Endothelial cell of umbilical vein (primary cell): ENCODE measurements at regions of chr5 and their contacts with region 1.

Region 1: DNA sequence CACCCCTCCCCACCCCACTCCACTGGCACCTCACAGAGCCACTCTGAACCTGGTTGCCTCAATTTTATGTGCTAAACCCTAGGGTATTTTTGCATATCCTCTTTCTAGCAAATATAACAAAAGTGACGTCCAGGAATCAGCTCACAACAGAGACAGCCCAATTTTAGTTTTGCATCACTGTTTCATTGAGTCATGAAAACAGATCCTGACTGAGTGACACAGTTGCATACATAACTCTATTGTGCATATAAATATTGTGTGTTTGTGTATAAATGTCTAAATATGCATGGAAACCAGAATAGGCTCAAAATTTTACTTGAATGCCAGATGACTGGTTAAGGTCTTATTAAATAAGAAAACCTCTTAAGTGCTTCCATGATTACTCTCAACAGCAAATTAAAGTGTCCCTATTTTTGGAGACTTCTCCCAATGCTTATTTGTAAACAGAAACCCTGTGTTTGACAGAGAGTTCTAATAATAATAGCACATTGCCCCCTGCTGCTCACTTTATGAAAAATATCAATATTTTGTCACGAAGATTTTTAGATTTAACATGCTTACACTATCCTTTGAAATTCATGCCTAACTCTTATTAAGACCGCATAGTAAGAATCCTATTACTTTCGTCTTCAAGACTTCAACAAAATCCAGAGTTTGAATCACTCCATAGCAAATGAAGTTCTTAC is 75.5 kb upstream of the PRRC1 start:
- DNase-seq: peak; percentile 10
- H3K4me3 ChIP-seq: no peak overlapping the region
- H3K27ac ChIP-seq: no peak overlapping the region
- H3K4me1 ChIP-seq: no peaks in the 10 kb centered on the region
- H3K27me3 ChIP-seq: peaks cover 6 to 18% of the 10 kb centered on the region in 2 experiments
- CTCF ChIP-seq: no peak
- POLR2A ChIP-seq: no peak

Region 2: GRCh38 chr5:126656396-126657007 is 785.4 kb before region 1 on chr5:
- CTCF ChIA-PET with region 1: interaction called, 4 read pairs
- POLR2A ChIA-PET with region 1: no interaction called
- dilution Hi-C with region 1: no loop called
- intact Hi-C with region 1: loop called (anchors 1 kb)
- DNase-seq: peak; percentile 47
- H3K4me3 ChIP-seq: no peak overlapping the region
- H3K27ac ChIP-seq: no peak overlapping the region
- H3K4me1 ChIP-seq: no peaks in the 10 kb centered on the region
- H3K27me3 ChIP-seq: no peaks in the 10 kb centered on the region
- CTCF ChIP-seq: peak; percentile 61 to 62
- POLR2A ChIP-seq: no peak

Region 3: DNA sequence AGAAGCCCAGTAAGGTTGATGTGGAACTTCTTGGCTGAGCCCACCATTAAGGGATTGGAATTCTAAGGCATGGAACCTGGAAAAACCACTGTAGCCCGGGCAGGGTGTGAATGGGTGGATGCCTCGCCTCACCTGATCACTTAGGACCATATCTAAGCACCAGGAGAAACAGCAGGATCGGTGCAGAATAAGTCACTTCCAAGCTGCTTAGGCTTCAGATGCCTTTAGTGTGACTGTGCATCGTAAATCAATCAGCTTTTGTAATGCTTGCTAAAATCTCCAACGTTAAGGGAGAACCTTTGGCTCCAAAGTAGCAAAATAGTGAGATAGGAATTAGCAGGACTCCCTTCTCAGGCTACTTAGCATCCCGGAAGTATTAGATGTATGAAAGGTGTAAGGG is 255.3 kb before region 1 on chr5:
- CTCF ChIA-PET with region 1: no interaction called
- POLR2A ChIA-PET with region 1: no interaction called
- dilution Hi-C with region 1: no loop called
- intact Hi-C with region 1: loop called (anchors 10 kb)
- DNase-seq: no peak
- H3K4me3 ChIP-seq: no peak overlapping the region
- H3K27ac ChIP-seq: no peak overlapping the region
- H3K4me1 ChIP-seq: no peaks in the 10 kb centered on the region
- H3K27me3 ChIP-seq: peaks cover 0 to 5% of the 10 kb centered on the region in 2 experiments
- CTCF ChIP-seq: no peak
- POLR2A ChIP-seq: no peak

Region 4: DNA sequence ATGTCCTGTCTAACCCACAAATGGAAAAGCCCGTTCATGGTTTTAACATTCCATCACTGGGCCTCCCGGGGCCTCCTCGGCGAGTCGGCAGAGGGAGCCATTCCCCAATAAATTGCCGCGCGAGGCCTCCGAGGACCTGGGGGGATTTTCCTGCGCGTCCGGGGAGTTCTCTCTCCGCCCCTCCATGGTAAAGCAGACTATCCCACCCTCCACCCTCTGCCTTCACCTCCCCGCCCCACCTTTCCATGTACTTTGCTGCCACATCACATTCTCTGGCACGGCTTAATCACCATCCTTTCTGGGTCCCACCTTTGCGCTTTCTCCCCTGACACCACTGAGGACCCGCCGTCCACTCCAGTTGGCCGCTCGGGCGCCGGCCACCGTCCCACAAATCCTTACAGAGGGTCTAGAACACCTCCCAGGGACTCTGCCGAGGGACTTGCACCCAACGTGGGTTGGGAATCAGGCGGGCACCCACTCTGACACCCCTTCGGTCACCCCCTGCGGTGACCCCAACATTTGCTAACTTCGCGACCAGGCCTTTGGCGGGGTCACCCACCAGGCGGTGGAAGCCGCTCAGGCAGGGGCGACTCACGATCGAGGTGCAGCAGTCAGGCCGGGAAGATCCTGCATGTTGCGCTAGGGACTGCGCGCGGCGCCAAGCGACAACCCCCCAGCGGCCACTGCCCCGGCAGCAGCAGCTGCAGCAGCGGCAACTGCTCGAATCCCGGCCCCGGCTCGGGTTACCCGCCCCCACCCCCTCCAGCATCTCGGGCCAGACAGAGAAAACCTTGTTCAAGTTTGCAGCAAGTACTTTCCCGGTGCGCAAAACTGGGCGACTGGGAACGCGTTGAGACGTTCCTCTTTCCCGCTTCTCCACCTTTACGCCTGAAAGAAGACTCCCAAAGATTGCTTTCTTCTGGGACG is 151.7 kb before region 1 on chr5 and contains the start of gene MEGF10:
- CTCF ChIA-PET with region 1: interaction called, 3 read pairs
- POLR2A ChIA-PET with region 1: no interaction called
- dilution Hi-C with region 1: no loop called
- intact Hi-C with region 1: loop called (anchors 1 kb)
- DNase-seq: peak; percentile 33
- H3K4me3 ChIP-seq: peak within 1 kb of the TSS; percentile 8 to 46 (median 28)
- H3K27ac ChIP-seq: no peak within 1 kb of the TSS
- H3K4me1 ChIP-seq: peaks cover 17% of the 10 kb centered on the region
- H3K27me3 ChIP-seq: peaks cover 26 to 47% of the 10 kb centered on the region in 2 experiments
- CTCF ChIP-seq: peak; percentile 66 to 71
- POLR2A ChIP-seq: no peak
- total RNA-seq, gene MEGF10: 0.21 and 1.00 TPM in 2 replicates

Region 5: DNA sequence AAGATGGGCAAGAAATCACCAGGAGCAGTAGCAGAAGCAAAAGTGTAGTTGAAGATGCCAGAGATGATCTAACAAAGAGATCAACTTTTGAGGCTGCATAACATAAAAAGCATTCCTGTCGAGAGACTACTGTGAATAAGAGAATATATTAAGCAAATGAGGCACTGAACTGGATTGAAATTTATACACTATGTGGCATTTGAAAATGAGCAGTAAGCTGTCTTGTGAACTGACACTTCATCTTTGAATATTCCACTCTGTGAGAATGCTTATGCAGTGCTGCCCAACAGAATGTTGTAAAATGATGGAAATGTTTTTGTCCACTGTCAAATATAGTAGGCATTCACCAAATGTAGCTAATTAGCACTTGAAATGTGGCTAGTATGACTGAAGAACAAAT is 56.6 kb after region 1 on chr5:
- CTCF ChIA-PET with region 1: no interaction called
- POLR2A ChIA-PET with region 1: no interaction called
- dilution Hi-C with region 1: no loop called
- intact Hi-C with region 1: no loop called
- DNase-seq: no peak
- H3K4me3 ChIP-seq: no peak overlapping the region
- H3K27ac ChIP-seq: no peak overlapping the region
- H3K4me1 ChIP-seq: no peaks in the 10 kb centered on the region
- H3K27me3 ChIP-seq: peaks cover 11 to 40% of the 10 kb centered on the region in 2 experiments
- CTCF ChIP-seq: no peak
- POLR2A ChIP-seq: no peak